ENCODE measurements at regions of chr11 and their contacts with region 1.

Region 1: DNA sequence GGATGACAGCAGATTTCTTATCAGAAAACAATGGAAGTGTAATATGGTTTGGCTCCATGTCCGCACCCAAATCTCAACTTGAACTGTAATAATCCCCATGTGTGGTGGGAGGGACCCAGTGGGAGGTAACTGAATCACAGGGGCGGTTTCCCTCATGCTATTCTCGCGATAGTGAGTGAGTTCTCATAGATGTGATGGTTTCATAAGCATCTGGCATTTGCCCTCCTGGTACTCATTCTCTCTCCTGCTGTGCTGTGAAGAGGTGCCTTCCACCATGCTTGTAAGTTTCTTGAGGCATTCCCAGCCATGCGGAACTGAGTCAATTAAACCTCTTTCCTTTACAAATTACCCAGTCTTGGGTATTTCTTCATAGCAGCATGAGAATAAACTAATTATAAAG is 81.0 kb upstream of the SCUBE2 start:
- DNase-seq: no peak
- H3K27ac ChIP-seq: no peak overlapping the region
- CTCF ChIP-seq: no peak

Region 2: GRCh38 chr11:9158898-9159391 is 13.4 kb before region 1 on chr11:
- CTCF ChIA-PET with region 1: interaction called, 10 read pairs
- POLR2A ChIA-PET with region 1: no interaction called
- DNase-seq: peak; percentile 25
- H3K27ac ChIP-seq: no peak overlapping the region
- CTCF ChIP-seq: no peak